AG04449 (cell line): ENCODE measurements at regions of chr1 and their contacts with region 1.

Region 1: DNA sequence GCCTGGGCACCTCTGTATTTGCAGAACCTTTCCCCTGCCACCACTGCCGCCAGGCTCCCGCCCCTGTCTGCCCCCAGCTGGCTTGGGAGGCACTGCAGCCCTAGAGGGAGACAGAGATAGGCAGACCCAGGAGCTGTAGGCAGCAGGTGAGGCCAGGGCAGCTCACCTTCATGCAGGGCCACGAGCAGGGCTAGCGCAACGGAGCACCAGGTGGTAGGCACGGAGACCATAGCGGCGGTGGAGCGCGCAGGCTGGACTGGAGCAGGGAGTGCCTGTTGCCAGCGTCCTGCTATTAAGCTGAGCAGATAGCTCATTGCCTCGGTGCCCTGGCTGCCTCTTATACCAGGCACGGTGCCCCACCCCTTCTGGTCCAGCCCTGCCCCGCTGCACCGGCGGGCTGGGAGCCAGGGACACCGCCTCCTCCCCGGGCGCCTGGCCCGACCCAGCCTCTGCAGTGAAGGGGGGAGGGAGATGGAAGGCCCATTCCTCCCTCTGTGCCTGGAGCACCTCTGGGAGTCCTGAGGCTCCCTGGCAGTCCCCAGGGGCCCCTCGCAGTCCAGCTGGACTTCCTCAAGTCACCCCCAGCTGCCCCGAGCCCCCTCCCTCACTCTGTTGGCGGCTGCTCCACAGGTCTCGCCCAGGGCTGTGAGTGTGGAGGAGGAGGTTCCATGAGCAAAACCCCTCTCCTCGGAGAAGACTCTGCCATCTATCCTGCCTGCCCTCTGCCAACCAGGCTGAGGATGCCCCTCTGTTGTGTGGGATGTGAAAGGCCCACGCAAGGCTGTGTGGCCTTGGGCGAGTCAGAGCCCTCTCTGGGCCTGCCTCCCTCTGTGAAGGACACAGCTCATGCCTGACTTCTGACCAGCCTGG is at the start of gene EDN2:
- DNase-seq: no peak
- H3K4me3 ChIP-seq: no peak within 1 kb of the TSS
- CTCF ChIP-seq: peak; percentile 24

Region 2: GRCh38 chr1:41496080-41497055 is 11.8 kb after region 1 on chr1:
- CTCF ChIA-PET with region 1: interaction called, 17 read pairs
- POLR2A ChIA-PET with region 1: no interaction called
- DNase-seq: no peak
- H3K4me3 ChIP-seq: peak overlapping the region; percentile 36
- CTCF ChIP-seq: no peak